ENCODE measurements at regions of chr6 and their contacts with region 1.

Region 1: GRCh38 chr6:109705258-109705657 is 14.2 kb downstream of the FIG4 start:
- DNase-seq: peak; percentile 60
- H3K4me3 ChIP-seq: no peak overlapping the region
- CTCF ChIP-seq: peak; percentile 92

Region 2: DNA sequence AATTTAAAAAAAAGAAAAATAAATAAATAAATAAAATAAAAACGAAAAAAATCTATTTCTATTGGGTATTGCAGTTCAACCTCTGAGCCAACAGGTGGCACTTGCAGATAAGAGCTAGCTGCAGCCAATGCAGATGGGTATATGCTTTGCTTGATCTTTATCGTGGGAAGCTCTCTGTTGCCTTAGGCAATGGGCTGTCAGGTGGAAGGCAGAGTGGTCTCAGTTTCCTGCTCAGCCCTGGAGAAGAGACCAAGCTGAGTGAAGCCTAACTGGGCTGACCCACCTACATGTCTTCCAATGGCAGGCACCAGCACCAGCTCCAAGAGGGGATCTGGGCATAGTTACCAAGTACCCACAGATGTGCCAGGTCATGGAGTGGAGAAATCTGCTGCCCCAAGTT is 109.3 kb before region 1 on chr6:
- CTCF ChIA-PET with region 1: interaction called, 14 read pairs
- POLR2A ChIA-PET with region 1: no interaction called
- DNase-seq: peak; percentile 19
- H3K4me3 ChIP-seq: no peak overlapping the region
- CTCF ChIP-seq: peak; percentile 64

Region 3: GRCh38 chr6:109718991-109719390 is 13.7 kb after region 1 on chr6:
- CTCF ChIA-PET with region 1: interaction called, 51 read pairs
- POLR2A ChIA-PET with region 1: no interaction called
- DNase-seq: no peak
- H3K4me3 ChIP-seq: no peak overlapping the region
- CTCF ChIP-seq: no peak

Region 4: DNA sequence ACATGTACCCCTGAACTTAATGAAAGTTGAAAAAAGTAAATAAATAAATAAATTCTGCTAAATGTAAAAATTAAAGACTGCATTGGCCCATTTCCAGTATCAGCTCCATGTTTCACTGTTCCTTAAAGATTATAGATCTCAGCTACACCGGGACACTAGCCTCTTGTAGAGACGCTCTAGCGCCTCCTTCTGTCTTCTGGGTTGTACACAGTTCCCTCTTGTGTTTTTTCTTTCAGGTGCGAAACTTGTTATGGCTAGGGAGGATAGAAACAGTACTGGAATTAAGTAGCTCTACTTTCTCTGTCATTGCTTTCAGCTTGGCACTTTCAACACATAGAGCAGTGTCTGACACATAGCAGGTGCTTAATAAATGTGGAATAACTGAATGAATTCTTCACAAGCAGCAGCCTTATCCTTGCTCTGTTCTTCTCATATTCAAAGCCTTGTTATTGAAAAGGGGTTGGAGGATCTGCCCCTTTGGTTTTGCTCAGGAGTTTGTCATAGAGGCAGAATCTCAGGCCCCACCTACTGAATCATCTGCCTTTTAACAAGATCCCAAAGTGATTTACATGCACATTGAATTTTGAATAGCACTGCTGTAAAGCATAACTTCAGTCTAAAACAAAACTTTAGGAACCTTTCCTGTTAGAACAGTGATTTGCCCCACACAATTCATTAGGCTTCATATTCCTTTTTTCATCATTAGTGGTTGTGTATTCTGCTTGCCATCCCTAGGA is 78.2 kb after region 1 on chr6:
- CTCF ChIA-PET with region 1: interaction called, 25 read pairs
- POLR2A ChIA-PET with region 1: no interaction called
- DNase-seq: no peak
- H3K4me3 ChIP-seq: no peak overlapping the region
- CTCF ChIP-seq: peak; percentile 15

Region 5: GRCh38 chr6:110048221-110048875 is 343.1 kb after region 1 on chr6:
- CTCF ChIA-PET with region 1: interaction called, 551 read pairs
- POLR2A ChIA-PET with region 1: no interaction called
- DNase-seq: no peak
- H3K4me3 ChIP-seq: no peak overlapping the region
- CTCF ChIP-seq: no peak

Region 6: DNA sequence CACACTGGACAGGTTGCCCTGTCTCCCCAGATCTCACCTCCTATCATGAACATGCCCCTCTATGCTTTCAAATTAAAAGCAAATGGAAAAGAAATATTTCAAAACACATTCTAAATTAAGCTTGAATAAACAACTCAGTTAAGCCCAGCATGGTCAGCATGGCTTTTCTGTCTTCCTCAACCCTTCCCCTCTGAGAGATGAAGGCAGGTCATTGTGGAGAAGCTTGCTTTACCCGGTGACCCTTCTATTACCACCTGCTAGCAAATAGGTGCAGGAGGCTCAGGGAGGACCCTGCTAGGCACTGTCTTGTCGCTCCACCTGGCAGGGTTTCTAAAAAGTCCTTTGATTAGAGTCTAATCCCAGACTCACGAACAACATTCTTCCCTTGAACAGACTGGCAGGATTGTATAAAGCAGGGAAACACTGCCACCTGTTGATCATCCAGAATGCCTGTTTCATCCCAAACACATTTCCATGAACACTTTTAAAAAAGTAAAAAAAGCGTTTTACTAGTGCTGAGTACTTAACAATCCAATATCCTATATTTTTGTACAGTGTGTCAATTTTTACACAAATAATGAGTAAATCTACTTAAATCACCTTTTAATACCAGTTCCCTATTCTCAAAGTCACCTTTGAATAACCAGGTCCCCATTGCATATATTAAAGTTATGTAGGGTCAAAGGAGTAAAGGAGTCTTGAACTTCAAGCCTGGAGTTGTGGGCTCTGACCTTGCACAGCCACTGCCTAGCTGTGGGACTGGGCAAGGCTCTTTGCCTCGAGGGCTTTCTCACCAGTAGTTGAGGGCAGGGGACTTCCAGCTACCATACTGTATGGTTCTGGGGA is 348.4 kb after region 1 on chr6:
- CTCF ChIA-PET with region 1: interaction called, 30 read pairs
- POLR2A ChIA-PET with region 1: no interaction called
- DNase-seq: peak; percentile 19
- H3K4me3 ChIP-seq: no peak overlapping the region
- CTCF ChIP-seq: peak; percentile 66

Region 7: DNA sequence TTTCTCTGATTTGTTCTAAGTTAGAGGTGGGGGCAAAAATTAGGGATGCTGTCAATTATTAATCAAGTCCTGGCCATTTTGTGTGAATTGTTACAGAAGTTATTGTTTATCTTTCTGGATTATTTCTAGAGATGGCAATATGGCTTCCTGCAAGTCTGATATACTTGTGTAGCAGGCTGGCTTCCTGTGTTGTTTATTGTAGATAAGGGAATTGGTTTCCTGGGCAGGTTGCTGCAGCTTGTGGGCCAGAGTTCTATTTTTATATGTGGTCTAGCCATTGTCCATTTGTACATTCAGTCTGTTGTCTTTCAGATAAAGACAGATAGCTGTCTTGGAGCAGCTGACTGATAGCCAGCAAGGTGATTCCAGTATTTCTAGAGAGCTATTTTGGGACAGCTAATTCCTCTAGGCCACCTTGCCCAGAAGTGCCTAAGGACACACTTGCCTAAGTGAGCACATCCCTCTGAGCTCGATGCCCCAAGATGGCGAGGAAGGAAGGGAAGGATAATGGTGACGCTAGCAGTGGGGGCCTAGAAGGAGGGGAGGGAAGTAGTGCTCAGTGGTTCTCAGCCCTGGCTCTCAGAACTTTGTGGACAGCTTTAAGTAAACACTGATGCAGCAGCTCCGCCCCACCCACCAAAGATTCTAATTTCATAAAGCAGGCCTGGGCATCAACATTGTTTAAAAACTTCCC is 684.6 kb after region 1 on chr6:
- CTCF ChIA-PET with region 1: interaction called, 38 read pairs
- POLR2A ChIA-PET with region 1: no interaction called
- DNase-seq: no peak
- H3K4me3 ChIP-seq: no peak overlapping the region
- CTCF ChIP-seq: no peak